ENCODE measurements at regions of chr2 and their contacts with region 1.

Region 1: DNA sequence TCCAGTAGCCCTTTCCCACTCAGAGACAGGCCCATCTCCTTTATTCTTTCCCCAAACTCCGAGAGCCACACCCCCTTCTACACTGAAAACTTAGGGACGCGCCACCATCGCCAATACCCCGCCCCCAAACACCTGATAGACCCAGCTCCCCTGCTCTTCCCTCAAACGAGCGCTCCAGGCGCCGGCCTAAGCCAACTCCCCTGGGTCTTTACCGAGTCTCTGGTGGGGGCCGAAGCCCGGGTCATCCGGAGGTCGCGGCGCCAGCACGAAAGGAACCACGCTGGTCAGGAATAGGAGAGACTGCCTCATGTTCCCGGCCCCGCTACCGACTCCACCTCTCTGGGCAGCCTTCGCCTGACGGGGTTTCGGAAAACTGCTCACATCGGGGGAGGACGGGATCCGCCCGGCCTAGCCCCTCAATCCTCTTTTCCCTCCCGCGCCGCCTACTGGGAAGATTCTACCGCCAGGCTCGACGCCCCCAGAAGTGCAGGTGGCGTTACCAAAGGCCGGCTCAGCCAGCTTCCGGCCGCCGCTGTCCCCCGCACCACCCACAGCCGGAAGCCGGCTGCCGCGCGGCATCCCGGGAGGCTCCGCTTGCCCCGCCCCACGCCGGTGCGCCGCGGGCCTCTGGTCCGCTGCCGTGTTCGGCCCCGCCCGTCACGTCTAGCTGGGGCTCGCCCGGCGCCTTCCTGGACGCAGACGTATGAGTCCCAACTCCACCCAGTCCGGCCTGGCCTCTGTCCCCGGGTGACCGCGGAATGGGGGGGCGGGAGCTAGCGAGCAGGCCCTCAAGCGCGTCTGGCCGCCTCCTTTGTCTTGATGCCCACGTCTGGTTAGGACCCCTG is at the start of gene ADAM17:
- DNase-seq: peak; percentile 92
- H3K4me3 Mint-ChIP-seq: peak within 1 kb of the TSS; percentile 97
- H3K27ac Mint-ChIP-seq: peak within 1 kb of the TSS; percentile 94
- H3K4me1 Mint-ChIP-seq: peaks cover 58% of the 10 kb centered on the region
- H3K27me3 Mint-ChIP-seq: no peaks in the 10 kb centered on the region
- total RNA-seq, gene ADAM17: 28.9 to 31.0 TPM

Region 2: GRCh38 chr2:9415516-9416169 is 139.9 kb before region 1 on chr2:
- CTCF ChIA-PET with region 1: no interaction called
- POLR2A ChIA-PET with region 1: no interaction called
- DNase-seq: no peak
- H3K4me3 Mint-ChIP-seq: no peak overlapping the region
- H3K27ac Mint-ChIP-seq: no peak overlapping the region
- H3K4me1 Mint-ChIP-seq: peaks cover 51% of the 10 kb centered on the region
- H3K27me3 Mint-ChIP-seq: no peaks in the 10 kb centered on the region

Region 3: GRCh38 chr2:9474361-9474967 is 81.1 kb before region 1 on chr2 and contains the start of gene IAH1:
- CTCF ChIA-PET with region 1: interaction called, 3 read pairs
- POLR2A ChIA-PET with region 1: interaction called, 50 read pairs
- DNase-seq: peak; percentile 76
- H3K4me3 Mint-ChIP-seq: peak within 1 kb of the TSS; percentile 79
- H3K27ac Mint-ChIP-seq: peak within 1 kb of the TSS; percentile 80
- H3K4me1 Mint-ChIP-seq: peaks cover 52% of the 10 kb centered on the region
- H3K27me3 Mint-ChIP-seq: no peaks in the 10 kb centered on the region
- total RNA-seq, gene IAH1: 69.2 to 79.0 TPM

Region 4: GRCh38 chr2:9585486-9585885 is 30.0 kb after region 1 on chr2:
- CTCF ChIA-PET with region 1: no interaction called
- POLR2A ChIA-PET with region 1: interaction called, 13 read pairs
- DNase-seq: no peak
- H3K4me3 Mint-ChIP-seq: no peak overlapping the region
- H3K27ac Mint-ChIP-seq: no peak overlapping the region
- H3K4me1 Mint-ChIP-seq: peaks cover 3% of the 10 kb centered on the region
- H3K27me3 Mint-ChIP-seq: no peaks in the 10 kb centered on the region

Region 5: DNA sequence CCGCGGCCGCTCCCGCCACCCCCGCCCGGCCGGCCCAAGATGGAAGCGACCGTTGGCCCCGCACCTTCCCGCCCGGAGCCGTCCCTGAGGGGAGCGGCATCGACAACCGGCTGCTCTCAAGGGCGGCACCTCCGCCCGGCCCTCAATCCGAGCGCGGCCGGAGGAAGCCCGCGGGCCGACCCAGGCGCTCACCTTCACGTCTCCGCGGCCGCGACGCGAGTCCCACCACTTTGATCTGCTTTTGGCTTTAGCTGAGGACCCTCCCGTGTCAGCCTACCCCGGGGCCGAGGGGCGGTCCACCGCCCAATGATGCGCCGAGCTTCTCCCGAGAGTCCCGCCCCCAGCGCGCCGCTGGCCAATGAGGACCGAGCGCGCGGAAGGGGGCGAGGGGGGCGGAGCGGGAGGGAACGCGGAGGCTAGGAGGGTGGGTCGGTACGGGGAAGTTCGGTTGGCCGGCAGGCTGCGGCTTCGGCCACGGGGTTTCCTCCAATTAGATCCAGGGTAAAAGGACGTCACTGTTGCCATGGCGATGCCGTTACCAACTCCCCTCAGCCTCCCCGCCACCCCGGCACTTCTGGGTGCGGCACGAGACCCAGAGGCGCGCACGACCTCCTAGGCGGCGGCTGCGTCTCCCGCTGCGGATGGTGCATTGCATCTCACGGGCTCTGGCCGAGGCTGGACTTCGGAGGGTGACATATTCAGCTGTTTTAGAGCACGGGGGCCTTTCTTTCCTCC is 75.4 kb after region 1 on chr2 and contains the start of gene YWHAQ:
- CTCF ChIA-PET with region 1: interaction called, 4 read pairs
- POLR2A ChIA-PET with region 1: interaction called, 62 read pairs
- DNase-seq: peak; percentile 98
- H3K4me3 Mint-ChIP-seq: peak within 1 kb of the TSS; percentile 93
- H3K27ac Mint-ChIP-seq: peak within 1 kb of the TSS; percentile 91
- H3K4me1 Mint-ChIP-seq: peaks cover 46% of the 10 kb centered on the region
- H3K27me3 Mint-ChIP-seq: peaks cover 2% of the 10 kb centered on the region
- total RNA-seq, gene YWHAQ: 335 to 351 TPM

Region 6: DNA sequence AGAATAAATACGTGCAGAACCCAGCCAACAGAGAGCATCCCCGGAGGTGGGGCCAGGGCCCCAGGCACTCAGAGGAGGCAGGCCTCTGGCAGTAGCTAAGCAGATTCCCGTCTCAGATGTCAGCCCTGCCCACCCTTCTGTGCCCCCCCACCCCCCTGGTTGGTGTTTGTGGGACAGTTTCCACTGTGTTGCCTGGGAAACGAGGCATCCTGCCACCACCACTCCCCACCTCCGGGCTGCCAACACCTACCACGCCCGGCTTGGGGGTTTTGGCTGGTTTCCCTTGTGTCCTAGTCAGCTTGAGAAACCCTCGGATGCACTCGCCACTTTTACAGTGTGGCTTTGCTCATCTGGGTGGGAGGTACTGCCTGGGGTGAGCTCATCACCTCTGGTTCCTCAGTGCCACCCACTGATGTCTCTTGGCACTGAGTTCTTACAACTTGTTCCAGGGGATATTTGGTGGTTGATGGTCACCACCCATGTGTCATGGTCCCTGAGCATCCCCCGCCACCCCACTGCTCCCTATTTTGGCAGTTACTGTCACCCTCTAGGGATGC is 147.6 kb after region 1 on chr2:
- CTCF ChIA-PET with region 1: interaction called, 5 read pairs
- POLR2A ChIA-PET with region 1: interaction called, 29 read pairs
- DNase-seq: peak; percentile 96
- H3K4me3 Mint-ChIP-seq: peak overlapping the region; percentile 9
- H3K27ac Mint-ChIP-seq: peak overlapping the region; percentile 92
- H3K4me1 Mint-ChIP-seq: peaks cover 79% of the 10 kb centered on the region
- H3K27me3 Mint-ChIP-seq: no peaks in the 10 kb centered on the region

Region 7: DNA sequence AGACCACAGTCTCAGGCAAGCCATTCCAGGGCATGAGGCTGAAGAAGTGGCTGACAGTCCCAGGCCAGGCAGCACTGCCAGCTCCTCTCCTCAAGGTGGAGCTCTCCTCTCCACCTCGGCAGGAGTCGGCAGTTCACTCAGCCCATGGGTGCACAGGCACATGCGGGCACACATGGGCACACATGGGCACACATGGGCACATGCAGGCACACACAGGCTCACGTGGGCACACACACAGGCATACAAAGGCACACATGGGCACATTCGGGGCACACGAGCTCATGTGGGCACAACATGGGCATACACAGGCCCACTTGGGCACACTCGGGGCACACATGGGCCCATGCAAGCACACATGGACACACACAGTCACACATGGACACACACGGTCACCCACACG is 222.5 kb after region 1 on chr2:
- CTCF ChIA-PET with region 1: interaction called, 3 read pairs
- POLR2A ChIA-PET with region 1: interaction called, 14 read pairs
- DNase-seq: peak; percentile 41
- H3K4me3 Mint-ChIP-seq: no peak overlapping the region
- H3K27ac Mint-ChIP-seq: no peak overlapping the region
- H3K4me1 Mint-ChIP-seq: peaks cover 54% of the 10 kb centered on the region
- H3K27me3 Mint-ChIP-seq: no peaks in the 10 kb centered on the region